ENCODE measurements at regions of chr6 and their contacts with region 1.

Region 1: GRCh38 chr6:149235130-149235561 is 82.4 kb upstream of the TAB2 start:
- DNase-seq: peak; percentile 58
- H3K4me3 ChIP-seq: no peak overlapping the region
- CTCF ChIP-seq: no peak

Region 2: DNA sequence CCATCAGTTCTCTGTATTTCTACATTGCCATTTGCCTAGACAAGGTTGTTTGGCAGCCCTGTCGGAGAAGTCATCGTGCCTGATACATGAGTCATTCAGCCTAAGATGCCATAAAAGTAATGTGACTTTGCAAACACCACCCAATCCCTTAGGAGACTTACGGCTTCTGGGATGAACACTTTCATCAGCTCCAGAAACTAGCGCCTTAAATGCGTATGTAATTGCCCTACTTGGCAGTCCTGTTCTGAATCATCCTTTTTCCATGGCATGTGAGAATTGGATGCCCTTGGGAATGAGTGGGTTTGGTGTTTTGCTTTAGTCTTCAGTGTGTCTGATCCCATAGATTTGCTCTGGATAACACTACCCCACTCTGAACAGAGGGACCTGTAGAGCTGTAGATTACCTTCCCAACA is 734.0 kb before region 1 on chr6:
- in situ Hi-C with region 1: no loop called
- DNase-seq: peak; percentile 63
- H3K4me3 ChIP-seq: no peak overlapping the region
- CTCF ChIP-seq: no peak

Region 3: DNA sequence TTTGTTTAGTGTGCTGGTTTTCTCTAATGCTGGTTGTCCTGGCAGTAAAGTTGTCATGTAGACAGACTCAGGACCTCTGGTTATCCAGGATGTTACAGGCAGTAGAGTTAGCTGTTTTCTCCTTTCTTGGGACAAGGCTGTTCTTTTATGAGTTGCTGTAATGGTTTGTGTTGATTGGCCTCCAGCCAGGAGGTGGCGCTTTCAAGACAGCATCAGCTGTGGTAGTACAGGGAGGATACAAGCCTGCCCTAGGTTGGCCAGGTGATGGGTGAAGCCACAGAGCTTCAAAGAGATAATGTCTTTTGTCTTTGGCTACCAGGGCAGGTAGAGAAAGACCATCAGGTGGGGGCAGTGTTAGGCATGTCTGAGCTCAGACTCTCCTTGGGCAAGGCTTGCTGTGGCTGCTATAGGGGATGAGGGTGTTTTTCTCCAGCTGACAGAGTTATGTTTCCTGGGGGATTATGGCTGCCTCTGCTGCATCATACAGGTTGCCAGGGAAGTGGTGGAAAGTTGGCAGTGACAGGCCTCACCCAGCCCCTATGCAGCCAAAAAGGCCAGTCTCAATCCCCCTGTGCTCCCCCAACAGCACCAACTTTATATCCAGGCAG is 44.8 kb before region 1 on chr6:
- in situ Hi-C with region 1: no loop called
- DNase-seq: no peak
- H3K4me3 ChIP-seq: no peak overlapping the region
- CTCF ChIP-seq: no peak

Region 4: GRCh38 chr6:149284904-149285303 is 49.8 kb after region 1 on chr6:
- in situ Hi-C with region 1: loop called (anchors 5 kb)
- DNase-seq: no peak
- H3K4me3 ChIP-seq: no peak overlapping the region
- CTCF ChIP-seq: no peak

Region 5: GRCh38 chr6:149300563-149300962 is 65.4 kb after region 1 on chr6:
- in situ Hi-C with region 1: no loop called
- DNase-seq: no peak
- H3K4me3 ChIP-seq: no peak overlapping the region
- CTCF ChIP-seq: no peak